Tibial artery (tissue), 4 donors: ENCODE measurements at regions of chr4 and their contacts with region 1.

Region 1: DNA sequence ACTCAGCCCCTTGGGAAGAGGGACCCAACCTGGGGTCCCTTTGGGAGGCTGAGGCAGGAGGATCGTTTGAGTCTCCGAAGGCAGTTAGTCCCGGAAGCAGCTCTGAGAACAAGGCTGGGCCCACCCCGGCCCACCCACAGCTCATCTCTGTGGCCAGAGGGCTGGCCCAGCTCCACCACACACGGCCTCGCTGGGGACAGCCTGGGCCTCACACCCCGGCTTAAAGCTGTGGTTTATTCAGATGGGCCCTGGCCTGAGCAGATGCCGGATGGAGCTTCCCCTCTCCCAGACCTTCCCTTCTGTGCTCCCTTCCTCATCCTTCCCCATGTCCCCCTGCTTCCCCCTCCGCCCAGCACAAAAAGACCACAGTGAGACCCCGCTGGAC is 54.4 kb downstream of the FAM53A start:
- DNase-seq: no peak
- H3K4me3 ChIP-seq: no peak overlapping the region
- H3K27ac ChIP-seq: no peak overlapping the region
- H3K4me1 ChIP-seq: peaks cover 0 to 5% (median 0%) of the 10 kb centered on the region in 4 donors
- H3K27me3 ChIP-seq: peaks cover 0 to 12% of the 10 kb centered on the region in 2 donors
- CTCF ChIP-seq: no peak

Region 2: GRCh38 chr4:1357356-1358248 is 272.1 kb before region 1 on chr4:
- intact Hi-C with region 1: loop called (anchors 2 kb)
- DNase-seq: no peak
- H3K4me3 ChIP-seq: no peak overlapping the region
- H3K27ac ChIP-seq: no peak overlapping the region
- H3K4me1 ChIP-seq: no peaks in the 10 kb centered on the region
- H3K27me3 ChIP-seq: no peaks in the 10 kb centered on the region
- CTCF ChIP-seq: no peak